A673 (cell line): ENCODE measurements at regions of chr1 and their contacts with region 1.

Region 1: GRCh38 chr1:220733090-220733601 is 15.0 kb upstream of the MTARC2 start:
- DNase-seq: peak; percentile 86
- H3K4me3 ChIP-seq: no peak overlapping the region
- H3K27ac ChIP-seq: no peak overlapping the region
- H3K4me1 ChIP-seq: no peaks in the 10 kb centered on the region
- H3K27me3 ChIP-seq: no peaks in the 10 kb centered on the region
- CTCF ChIP-seq: peak; percentile 92

Region 2: DNA sequence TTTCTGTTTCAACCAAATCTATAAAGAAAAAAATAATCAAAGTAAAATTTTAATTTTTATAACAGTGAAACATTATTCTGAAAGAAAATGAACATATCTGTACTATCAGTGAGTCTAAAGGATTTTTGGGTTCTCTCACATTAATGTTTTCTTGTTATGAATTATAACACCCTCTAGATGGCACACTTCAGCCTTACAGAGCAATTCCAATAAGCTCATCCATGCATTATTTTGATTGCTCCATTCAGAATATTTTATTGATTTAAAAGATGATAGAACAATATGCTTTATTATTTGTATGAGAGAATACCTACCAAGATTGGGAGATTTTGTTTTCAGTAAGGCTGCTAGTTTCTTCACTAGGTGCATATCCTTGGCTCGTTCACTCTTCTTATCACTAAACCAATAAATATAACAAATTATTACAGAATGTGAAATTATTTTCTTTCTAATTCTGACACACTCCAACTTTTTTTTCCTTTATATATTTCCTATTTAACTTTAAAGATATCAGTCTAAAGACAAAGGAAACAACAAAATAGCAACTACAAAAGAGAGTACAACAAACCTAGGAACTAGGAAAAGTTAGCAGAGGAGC is 543.3 kb before region 1 on chr1:
- CTCF ChIA-PET with region 1: interaction called, 14 read pairs
- POLR2A ChIA-PET with region 1: no interaction called
- intact Hi-C with region 1: no loop called
- DNase-seq: peak; percentile 53
- H3K4me3 ChIP-seq: no peak overlapping the region
- H3K27ac ChIP-seq: no peak overlapping the region
- H3K4me1 ChIP-seq: no peaks in the 10 kb centered on the region
- H3K27me3 ChIP-seq: no peaks in the 10 kb centered on the region
- CTCF ChIP-seq: peak; percentile 64

Region 3: DNA sequence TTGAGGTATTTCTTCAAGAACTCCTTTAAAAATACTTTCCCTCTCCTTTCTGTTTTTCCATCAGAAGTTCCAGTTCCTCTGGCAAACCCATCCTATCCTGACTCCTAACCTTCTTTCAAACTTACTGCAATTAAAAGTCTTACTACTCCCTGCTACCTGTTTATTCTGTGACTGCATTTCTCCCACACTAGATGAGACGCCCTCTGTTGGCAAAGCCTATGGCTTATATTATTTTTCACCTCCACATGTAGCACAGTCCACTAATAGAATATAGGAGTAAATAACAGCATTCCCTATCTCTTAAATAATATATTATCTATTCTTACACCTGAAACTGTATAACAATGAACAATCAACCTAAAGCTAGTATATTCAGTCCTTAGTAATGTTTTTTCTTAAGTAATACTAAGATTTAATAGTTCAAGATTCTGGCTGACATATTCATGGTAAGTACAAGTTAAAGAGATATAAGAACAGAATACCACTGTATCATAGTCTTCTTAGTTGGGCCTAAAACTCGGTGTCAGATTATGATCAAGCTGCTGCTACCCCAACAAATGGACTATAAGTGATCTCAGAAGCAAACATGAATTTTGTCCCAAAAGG is 515.7 kb before region 1 on chr1:
- CTCF ChIA-PET with region 1: interaction called, 13 read pairs
- POLR2A ChIA-PET with region 1: no interaction called
- intact Hi-C with region 1: no loop called
- DNase-seq: peak; percentile 18
- H3K4me3 ChIP-seq: no peak overlapping the region
- H3K27ac ChIP-seq: no peak overlapping the region
- H3K4me1 ChIP-seq: no peaks in the 10 kb centered on the region
- H3K27me3 ChIP-seq: no peaks in the 10 kb centered on the region
- CTCF ChIP-seq: peak; percentile 61

Region 4: DNA sequence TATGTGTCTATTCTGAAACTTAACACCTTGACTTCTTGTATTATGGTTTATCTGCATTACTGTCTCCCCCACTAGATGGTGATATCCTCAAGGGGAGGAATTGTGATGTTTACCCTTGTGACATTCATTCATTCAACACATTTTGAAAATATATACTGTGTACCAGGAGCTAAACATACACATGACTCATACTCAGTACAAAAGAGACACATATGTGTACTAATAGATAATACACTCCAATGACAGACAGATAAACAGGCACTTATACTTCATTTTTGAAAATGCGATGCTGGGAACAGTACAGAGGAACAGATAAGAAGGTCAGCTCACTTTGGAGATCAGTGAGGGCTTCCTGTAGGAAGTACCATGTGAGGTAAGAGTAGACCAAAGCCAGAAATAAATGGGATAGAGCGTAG is 452.0 kb before region 1 on chr1:
- CTCF ChIA-PET with region 1: interaction called, 18 read pairs
- POLR2A ChIA-PET with region 1: no interaction called
- intact Hi-C with region 1: loop called (anchors 2 kb)
- DNase-seq: peak; percentile 47
- H3K4me3 ChIP-seq: no peak overlapping the region
- H3K27ac ChIP-seq: no peak overlapping the region
- H3K4me1 ChIP-seq: no peaks in the 10 kb centered on the region
- H3K27me3 ChIP-seq: peaks cover 4% of the 10 kb centered on the region
- CTCF ChIP-seq: peak; percentile 62

Region 5: GRCh38 chr1:220294846-220295301 is 438.3 kb before region 1 on chr1:
- CTCF ChIA-PET with region 1: interaction called, 19 read pairs
- POLR2A ChIA-PET with region 1: no interaction called
- intact Hi-C with region 1: no loop called
- DNase-seq: no peak
- H3K4me3 ChIP-seq: no peak overlapping the region
- H3K27ac ChIP-seq: no peak overlapping the region
- H3K4me1 ChIP-seq: no peaks in the 10 kb centered on the region
- H3K27me3 ChIP-seq: peaks cover 8% of the 10 kb centered on the region
- CTCF ChIP-seq: no peak

Region 6: GRCh38 chr1:220680085-220680687 is 53.0 kb before region 1 on chr1:
- CTCF ChIA-PET with region 1: no interaction called
- POLR2A ChIA-PET with region 1: no interaction called
- intact Hi-C with region 1: loop called (anchors 2 kb)
- DNase-seq: peak; percentile 42
- H3K4me3 ChIP-seq: no peak overlapping the region
- H3K27ac ChIP-seq: no peak overlapping the region
- H3K4me1 ChIP-seq: no peaks in the 10 kb centered on the region
- H3K27me3 ChIP-seq: no peaks in the 10 kb centered on the region
- CTCF ChIP-seq: peak; percentile 70

Region 7: GRCh38 chr1:220786337-220787068 is 53.4 kb after region 1 on chr1 and contains the start of gene MTARC1:
- CTCF ChIA-PET with region 1: no interaction called
- POLR2A ChIA-PET with region 1: no interaction called
- intact Hi-C with region 1: no loop called
- DNase-seq: no peak
- H3K4me3 ChIP-seq: peak within 1 kb of the TSS; percentile 33
- H3K27ac ChIP-seq: no peak within 1 kb of the TSS
- H3K4me1 ChIP-seq: peaks cover 4% of the 10 kb centered on the region
- H3K27me3 ChIP-seq: peaks cover 23% of the 10 kb centered on the region
- CTCF ChIP-seq: no peak
- total RNA-seq, gene MTARC1: 0.43 TPM in 1 of 2 replicates, not detected in the other